H1 (cell line): ENCODE measurements at regions of chr11 and their contacts with region 1.

Region 1: GRCh38 chr11:75142714-75143419 is 8.0 kb upstream of the SLCO2B1 start:
- DNase-seq: peak in 1 of 2 experiments; percentile 27
- H3K4me3 ChIP-seq: no peak overlapping the region
- H3K27ac ChIP-seq: no peak overlapping the region
- H3K4me1 ChIP-seq: no peaks in the 10 kb centered on the region
- H3K27me3 ChIP-seq: no peaks in the 10 kb centered on the region
- CTCF ChIP-seq: no peak
- EP300 ChIP-seq: no peak
- POLR2A ChIP-seq: no peak
- RAD21 ChIP-seq: no peak

Region 2: GRCh38 chr11:74769055-74769707 is 373.7 kb before region 1 on chr11:
- CTCF ChIA-PET with region 1: no interaction called
- POLR2A ChIA-PET with region 1: no interaction called
- DNase-seq: no peak
- H3K4me3 ChIP-seq: no peak overlapping the region
- H3K27ac ChIP-seq: no peak overlapping the region
- H3K4me1 ChIP-seq: no peaks in the 10 kb centered on the region; a peak in 1 of 7 replicates
- H3K27me3 ChIP-seq: no peaks in the 10 kb centered on the region
- CTCF ChIP-seq: no peak
- EP300 ChIP-seq: no peak
- POLR2A ChIP-seq: no peak
- RAD21 ChIP-seq: no peak

Region 3: GRCh38 chr11:75022759-75023396 is 120.0 kb before region 1 on chr11:
- CTCF ChIA-PET with region 1: interaction called, 142 read pairs
- POLR2A ChIA-PET with region 1: interaction called, 3 read pairs
- DNase-seq: peak; percentile 83 to 95
- H3K4me3 ChIP-seq: no peak overlapping the region
- H3K27ac ChIP-seq: no peak overlapping the region
- H3K4me1 ChIP-seq: no peaks in the 10 kb centered on the region; a peak in 2 of 7 replicates
- H3K27me3 ChIP-seq: no peaks in the 10 kb centered on the region
- CTCF ChIP-seq: peak; percentile 93 to 98 (median 98)
- EP300 ChIP-seq: no peak
- POLR2A ChIP-seq: no peak
- RAD21 ChIP-seq: peak; percentile 93 to 97

Region 4: GRCh38 chr11:75103380-75104026 is 39.4 kb before region 1 on chr11:
- CTCF ChIA-PET with region 1: interaction called, 10 read pairs
- POLR2A ChIA-PET with region 1: no interaction called
- DNase-seq: no peak
- H3K4me3 ChIP-seq: no peak overlapping the region
- H3K27ac ChIP-seq: no peak overlapping the region
- H3K4me1 ChIP-seq: peaks cover 0 to 2% (median 0%) of the 10 kb centered on the region in 4 experiments; a peak in 2 of 7 replicates
- H3K27me3 ChIP-seq: no peaks in the 10 kb centered on the region
- CTCF ChIP-seq: no peak
- EP300 ChIP-seq: no peak
- POLR2A ChIP-seq: no peak
- RAD21 ChIP-seq: no peak

Region 5: DNA sequence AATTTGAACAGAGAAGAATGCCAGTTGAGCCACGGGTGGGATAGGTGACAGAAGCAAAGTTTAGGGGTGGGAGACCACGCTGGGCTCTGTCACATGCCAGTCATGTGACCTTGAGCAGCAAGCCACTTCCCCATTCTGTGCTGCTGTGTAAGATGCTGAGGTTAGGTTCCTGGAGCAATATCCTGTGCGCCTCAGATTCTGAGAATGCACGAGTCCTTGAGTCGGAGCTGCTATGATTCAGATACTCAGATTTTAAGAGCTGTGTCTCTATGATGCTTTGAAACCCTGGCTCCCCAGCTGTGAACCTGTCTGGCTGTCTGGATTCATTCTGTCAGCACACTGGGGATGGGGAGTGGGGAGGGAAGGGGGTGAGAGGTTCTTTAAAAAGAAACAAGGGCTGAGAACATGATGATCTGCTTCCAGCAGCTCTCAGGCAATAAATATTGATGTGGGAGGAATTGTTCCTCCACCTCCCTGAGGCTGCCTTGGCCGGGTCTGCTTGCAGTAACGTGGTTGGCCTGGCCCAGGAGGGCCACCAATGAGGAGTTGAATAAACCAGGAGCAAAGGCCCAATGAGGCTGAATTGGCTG is 32.0 kb after region 1 on chr11:
- CTCF ChIA-PET with region 1: interaction called, 78 read pairs
- POLR2A ChIA-PET with region 1: no interaction called
- DNase-seq: no peak
- H3K4me3 ChIP-seq: no peak overlapping the region
- H3K27ac ChIP-seq: no peak overlapping the region
- H3K4me1 ChIP-seq: no peaks in the 10 kb centered on the region; a peak in 1 of 7 replicates
- H3K27me3 ChIP-seq: no peaks in the 10 kb centered on the region
- CTCF ChIP-seq: no peak
- EP300 ChIP-seq: no peak
- POLR2A ChIP-seq: no peak
- RAD21 ChIP-seq: no peak

Region 6: GRCh38 chr11:75214411-75214821 is 71.5 kb after region 1 on chr11:
- CTCF ChIA-PET with region 1: interaction called, 952 read pairs
- POLR2A ChIA-PET with region 1: no interaction called
- DNase-seq: peak; percentile 70 to 94
- H3K4me3 ChIP-seq: no peak overlapping the region
- H3K27ac ChIP-seq: no peak overlapping the region
- H3K4me1 ChIP-seq: no peaks in the 10 kb centered on the region
- H3K27me3 ChIP-seq: no peaks in the 10 kb centered on the region; a peak in 2 of 7 replicates
- CTCF ChIP-seq: peak; percentile 45 to 78 (median 70)
- EP300 ChIP-seq: no peak
- POLR2A ChIP-seq: no peak
- RAD21 ChIP-seq: peak; percentile 59 to 68

Region 7: DNA sequence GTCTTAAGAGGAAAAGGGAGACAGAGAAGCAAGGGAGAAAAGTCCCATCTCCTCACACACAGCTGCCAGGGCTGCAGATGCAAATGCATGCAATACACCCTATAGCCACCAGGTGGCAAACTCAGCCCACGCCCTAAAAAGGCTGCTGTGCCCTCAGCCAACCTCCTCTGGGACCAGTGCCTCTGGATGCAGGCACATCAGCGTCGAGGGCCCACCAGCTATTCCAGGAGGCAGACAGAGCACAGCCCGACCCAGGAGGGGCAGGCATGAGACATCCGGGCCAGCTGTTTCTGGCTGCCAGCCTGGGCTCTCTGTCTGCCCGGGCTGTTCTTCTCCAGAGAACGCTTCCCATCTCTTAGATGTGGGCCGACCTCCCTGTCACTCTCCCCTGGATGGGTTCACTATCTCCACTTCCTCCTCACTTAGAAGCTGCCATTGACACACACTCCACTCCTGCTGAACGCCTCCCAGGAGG is 137.4 kb after region 1 on chr11:
- CTCF ChIA-PET with region 1: interaction called, 10 read pairs
- POLR2A ChIA-PET with region 1: no interaction called
- DNase-seq: peak; percentile 76 to 92
- H3K4me3 ChIP-seq: no peak overlapping the region
- H3K27ac ChIP-seq: no peak overlapping the region
- H3K4me1 ChIP-seq: peaks cover 0 to 6% (median 0%) of the 10 kb centered on the region in 4 experiments; a peak in 2 of 7 replicates
- H3K27me3 ChIP-seq: no peaks in the 10 kb centered on the region
- CTCF ChIP-seq: peak; percentile 94 to 100 (median 96)
- EP300 ChIP-seq: no peak
- POLR2A ChIP-seq: no peak
- RAD21 ChIP-seq: peak; percentile 98